ENCODE measurements at regions of chr20 and their contacts with region 1.

Region 1: DNA sequence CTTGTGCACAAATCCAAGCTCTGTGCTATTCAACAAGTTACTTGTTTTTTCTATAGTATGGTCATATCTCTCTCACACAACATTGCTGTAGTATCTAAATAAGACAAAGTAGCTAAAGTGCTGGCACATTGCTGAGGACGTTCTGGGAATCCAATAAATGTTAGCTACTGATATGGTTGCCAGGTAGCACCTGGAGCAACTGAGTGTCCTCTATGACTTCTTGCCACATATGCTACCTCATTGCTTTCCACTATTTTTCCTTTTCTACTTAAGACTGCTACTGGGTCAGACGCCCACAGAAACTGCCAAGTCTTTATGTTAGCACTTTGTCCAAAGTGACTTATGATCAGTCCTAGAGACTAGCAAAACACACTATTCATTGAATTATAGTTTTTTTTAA is 85.3 kb downstream of the SYCP2 start:
- DNase-seq: no peak
- ATAC-seq: peak; percentile 60

Region 2: DNA sequence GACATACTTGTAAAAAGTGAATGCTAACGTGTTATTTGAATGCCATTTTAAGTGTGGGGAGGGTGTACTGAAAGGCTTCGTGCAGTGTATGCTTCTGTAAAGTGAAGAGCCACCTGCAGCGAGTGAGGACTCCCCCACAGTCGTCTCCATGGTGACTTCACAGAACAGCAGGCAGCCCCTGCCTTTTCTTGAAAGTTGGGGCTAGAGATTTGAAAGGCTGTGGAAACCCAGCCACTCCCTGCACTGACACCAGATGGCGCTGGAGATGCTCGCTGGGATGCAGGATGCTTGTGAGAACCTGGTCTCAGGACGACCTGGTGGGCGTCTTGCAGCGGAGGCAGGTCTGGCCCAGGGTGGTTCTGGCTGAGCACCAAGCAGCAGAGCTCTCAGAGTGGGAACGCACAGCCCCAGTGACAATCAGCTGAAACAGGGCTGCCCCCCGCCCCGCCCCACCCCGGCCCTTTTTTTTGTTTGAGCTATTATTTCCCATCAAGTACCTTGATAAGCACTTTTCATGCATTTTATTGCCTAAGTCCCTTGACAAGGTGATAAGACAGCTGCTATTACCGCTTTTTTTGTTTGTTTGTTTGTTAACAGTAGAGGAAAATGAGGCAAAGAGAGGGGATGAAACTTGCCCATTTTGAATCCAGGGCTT is 65.1 kb before region 1 on chr20:
- intact Hi-C with region 1: loop called (anchors 2 kb)
- DNase-seq: peak; percentile 74
- ATAC-seq: peak; percentile 76

Region 3: GRCh38 chr20:59920944-59921343 is 72.8 kb after region 1 on chr20:
- intact Hi-C with region 1: no loop called
- DNase-seq: no peak
- ATAC-seq: no peak

Region 4: GRCh38 chr20:59933849-59934596 is 85.8 kb after region 1 on chr20:
- intact Hi-C with region 1: no loop called
- DNase-seq: peak; percentile 90
- ATAC-seq: peak; percentile 91

Region 5: GRCh38 chr20:60718743-60719322 is 870.7 kb after region 1 on chr20:
- intact Hi-C with region 1: no loop called
- DNase-seq: no peak
- ATAC-seq: no peak